Posterior vena cava (tissue), 2 donors: ENCODE measurements at regions of chr5 and their contacts with region 1.

Region 1: GRCh38 chr5:91257301-91257700 is 125.8 kb downstream of the ARRDC3 start:
- DNase-seq: no peak

Region 2: DNA sequence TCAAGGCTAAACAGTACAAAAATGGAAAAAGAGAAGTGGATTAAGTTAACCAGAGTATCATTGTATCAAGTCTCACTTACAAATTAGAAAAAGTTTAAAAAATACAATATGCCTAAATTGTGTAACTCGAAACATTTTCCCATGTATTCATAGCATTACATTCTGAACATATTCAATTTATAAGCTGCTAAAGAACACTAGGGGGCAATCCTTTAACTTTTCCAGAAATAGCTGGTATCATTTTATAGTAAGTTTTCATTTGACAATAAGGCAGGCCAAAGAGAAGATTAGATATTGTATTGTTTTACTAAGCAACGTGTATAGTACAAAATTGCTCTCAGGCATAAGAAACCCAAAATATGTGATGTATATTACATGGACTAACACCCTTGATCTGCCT is 464.1 kb before region 1 on chr5:
- intact Hi-C with region 1: loop called in 1 of 2 experiments (anchors 10 kb)
- DNase-seq: no peak